Ovary (tissue), 10 donors: ENCODE measurements at regions of chr5 and their contacts with region 1.

Region 1: DNA sequence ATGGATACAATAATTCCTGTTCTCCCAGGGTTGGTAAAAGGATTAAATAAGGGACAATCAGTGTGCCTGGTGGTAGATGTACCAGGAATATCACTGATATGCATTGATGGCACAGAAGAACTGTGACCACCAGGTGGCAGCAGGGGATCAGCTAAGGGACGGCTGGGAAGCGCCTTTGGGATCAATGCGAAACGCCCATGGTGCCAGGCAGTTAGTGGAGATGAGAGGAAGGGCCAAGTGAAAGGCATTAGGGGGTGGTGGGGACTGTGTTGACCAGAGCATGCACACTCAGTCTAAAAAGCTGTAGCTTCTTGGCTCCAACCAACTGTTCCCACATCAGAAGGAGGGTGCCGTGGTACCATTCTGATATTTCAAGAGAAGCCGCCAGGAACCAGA is 55.6 kb downstream of the ARHGEF37 start:
- DNase-seq: peak; percentile 35 to 92 (median 55)
- H3K4me3 ChIP-seq: no peak overlapping the region
- H3K27ac ChIP-seq: no peak overlapping the region
- H3K4me1 ChIP-seq: peaks cover 15% of the 10 kb centered on the region
- H3K27me3 ChIP-seq: no peaks in the 10 kb centered on the region
- CTCF ChIP-seq: peak; percentile 54 to 89 (median 88)
- EP300 ChIP-seq: no peak
- POLR2A ChIP-seq: no peak

Region 2: DNA sequence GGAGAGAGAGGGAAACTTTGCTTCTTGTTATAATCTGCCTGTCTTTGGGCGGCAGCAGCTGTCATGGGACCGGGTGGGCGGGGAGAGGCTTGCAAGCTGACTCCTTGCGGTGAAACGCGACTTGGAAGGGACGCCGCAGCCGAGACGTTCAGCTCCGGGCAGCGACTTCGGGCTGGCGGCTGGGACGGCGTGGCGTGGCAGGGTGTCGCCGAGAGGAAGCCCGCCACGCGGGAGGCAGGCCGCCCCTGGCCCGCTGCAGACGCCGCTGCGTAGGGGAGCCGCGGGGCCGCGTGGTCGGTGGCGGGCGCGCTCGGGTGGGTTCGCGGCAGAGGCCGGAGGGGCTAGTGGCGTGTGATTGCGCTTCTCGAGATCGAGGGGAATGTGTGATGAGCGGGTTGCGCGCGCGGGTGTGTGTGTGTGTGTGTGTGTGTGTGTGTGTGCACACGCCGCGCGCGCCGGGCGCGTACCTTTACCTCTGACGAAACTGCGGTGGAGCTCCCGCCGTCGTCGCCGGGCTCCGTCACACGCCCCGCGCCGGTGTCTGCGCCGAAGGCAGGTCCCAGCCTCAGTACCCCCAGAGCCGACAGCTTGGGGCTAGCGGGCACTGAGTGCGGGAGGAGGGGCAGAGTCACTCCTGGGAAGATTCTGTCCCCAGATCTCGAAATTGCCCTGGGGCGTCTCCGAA is 94.9 kb after region 1 on chr5:
- intact Hi-C with region 1: loop called in 1 of 4 experiments (anchors 5 kb)
- DNase-seq: peak; percentile 42 to 75 (median 72)
- H3K4me3 ChIP-seq: peak overlapping the region; percentile 82
- H3K27ac ChIP-seq: peak overlapping the region in 1 of 2 donors; percentile 58
- H3K4me1 ChIP-seq: peaks cover 4% of the 10 kb centered on the region
- H3K27me3 ChIP-seq: no peaks in the 10 kb centered on the region
- CTCF ChIP-seq: no peak
- EP300 ChIP-seq: no peak
- POLR2A ChIP-seq: no peak

Region 3: GRCh38 chr5:149828161-149828884 is 191.5 kb after region 1 on chr5:
- intact Hi-C with region 1: loop called (anchors 1 to 2 kb)
- DNase-seq: peak; percentile 77 to 92 (median 89)
- H3K4me3 ChIP-seq: no peak overlapping the region
- H3K27ac ChIP-seq: no peak overlapping the region
- H3K4me1 ChIP-seq: peaks cover 17% of the 10 kb centered on the region
- H3K27me3 ChIP-seq: no peaks in the 10 kb centered on the region
- CTCF ChIP-seq: peak; percentile 78 to 88 (median 82)
- EP300 ChIP-seq: no peak
- POLR2A ChIP-seq: no peak

Region 4: GRCh38 chr5:149979896-149980295 is 343.0 kb after region 1 on chr5:
- intact Hi-C with region 1: loop called in 2 of 4 experiments (anchors 5 to 10 kb)
- DNase-seq: no peak
- H3K4me3 ChIP-seq: no peak overlapping the region
- H3K27ac ChIP-seq: no peak overlapping the region
- H3K4me1 ChIP-seq: no peaks in the 10 kb centered on the region
- H3K27me3 ChIP-seq: no peaks in the 10 kb centered on the region
- CTCF ChIP-seq: no peak
- EP300 ChIP-seq: no peak
- POLR2A ChIP-seq: no peak

Region 5: DNA sequence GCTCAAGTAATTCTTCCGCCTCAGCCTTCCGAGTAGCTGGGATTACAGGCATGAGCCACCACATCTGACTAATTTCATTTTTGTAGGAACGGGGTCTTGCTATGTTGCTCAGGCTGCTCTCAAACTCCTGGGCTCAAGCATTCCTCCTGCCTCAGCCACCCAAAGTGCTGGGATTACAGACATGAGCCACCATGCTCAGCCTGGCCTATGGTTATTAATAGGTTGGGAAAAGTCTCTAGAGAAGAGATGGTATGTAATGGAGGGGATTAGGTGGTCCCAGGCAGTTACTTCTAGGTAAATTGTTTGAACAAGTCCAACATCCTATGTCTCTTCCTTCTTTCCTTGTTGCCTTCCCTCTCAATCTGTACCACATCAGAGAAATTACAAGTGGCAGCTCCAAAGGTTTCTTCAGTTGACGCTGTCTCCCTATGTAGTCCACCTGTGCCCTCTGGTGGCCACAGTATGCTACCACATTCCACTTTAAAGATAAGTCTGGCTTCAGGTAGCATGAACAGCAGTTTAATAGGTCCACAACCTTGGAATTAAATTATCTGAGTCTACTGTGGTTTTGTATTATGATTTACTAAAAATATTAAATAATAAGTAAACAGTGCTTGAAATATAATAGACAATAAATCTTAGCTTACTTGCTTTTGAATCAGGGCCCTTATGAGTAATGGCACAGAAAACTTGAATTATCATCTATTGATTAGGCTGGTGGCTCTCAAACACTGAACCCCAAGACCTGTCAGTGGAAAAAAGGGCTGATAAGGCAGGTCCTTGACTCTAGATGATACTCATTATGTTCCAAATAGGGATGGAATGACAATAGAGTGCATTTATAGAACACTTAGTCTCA is 353.9 kb after region 1 on chr5:
- intact Hi-C with region 1: loop called in 3 of 4 experiments (anchors 5 to 10 kb)
- DNase-seq: peak; percentile 58 to 78 (median 70)
- H3K4me3 ChIP-seq: no peak overlapping the region
- H3K27ac ChIP-seq: no peak overlapping the region
- H3K4me1 ChIP-seq: no peaks in the 10 kb centered on the region
- H3K27me3 ChIP-seq: no peaks in the 10 kb centered on the region
- CTCF ChIP-seq: peak; percentile 61 to 84 (median 82)
- EP300 ChIP-seq: no peak
- POLR2A ChIP-seq: no peak